ENCODE measurements at regions of chr1 and their contacts with region 1.

Region 1: DNA sequence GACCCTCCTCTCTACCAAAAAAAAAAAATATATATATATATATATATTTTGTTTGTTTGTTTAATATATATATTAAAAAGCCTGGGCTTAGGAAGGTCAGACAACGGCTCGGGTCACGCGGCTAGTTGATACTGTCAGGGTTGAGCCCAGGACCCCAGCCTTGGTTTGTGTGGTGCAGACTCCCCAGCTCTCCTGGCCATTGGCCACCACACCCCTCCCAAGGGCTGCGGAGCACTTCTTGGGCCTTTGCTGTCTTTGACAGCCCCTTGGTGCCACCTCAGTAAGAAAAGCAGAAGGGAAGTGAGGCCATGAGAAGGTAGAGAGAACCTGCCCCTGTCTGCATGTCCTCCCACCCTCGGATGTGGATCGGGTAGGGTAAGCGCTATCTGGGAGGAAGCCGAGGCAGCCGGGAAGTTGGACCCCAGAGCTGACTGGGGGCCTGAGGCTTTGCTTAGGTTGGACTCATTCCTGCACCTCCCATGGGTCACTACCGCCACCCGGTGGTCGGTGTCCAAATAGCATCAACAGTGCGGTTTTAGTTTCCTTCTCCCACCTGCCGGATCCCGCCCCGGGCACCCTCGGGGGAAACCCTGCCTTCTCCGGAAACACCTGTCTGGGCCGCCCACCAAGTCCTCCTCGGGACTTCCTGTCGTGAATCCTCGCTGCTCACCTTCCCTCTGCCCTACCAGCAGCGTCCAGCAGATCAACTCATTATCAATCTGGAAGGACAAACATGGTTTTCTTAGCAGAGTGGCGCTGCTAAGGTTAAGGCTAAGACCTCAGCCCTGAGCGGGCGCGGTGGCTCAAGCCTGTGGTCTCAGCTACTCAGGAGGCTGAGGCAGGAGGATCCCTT is 29.8 kb upstream of the GNPAT start:
- DNase-seq: peak; percentile 94
- H3K4me3 Mint-ChIP-seq: peak overlapping the region; percentile 77
- H3K27ac Mint-ChIP-seq: peak overlapping the region; percentile 70
- H3K4me1 Mint-ChIP-seq: peaks cover 10% of the 10 kb centered on the region
- H3K27me3 Mint-ChIP-seq: no peaks in the 10 kb centered on the region
- CTCF ChIP-seq: peak; percentile 100

Region 2: DNA sequence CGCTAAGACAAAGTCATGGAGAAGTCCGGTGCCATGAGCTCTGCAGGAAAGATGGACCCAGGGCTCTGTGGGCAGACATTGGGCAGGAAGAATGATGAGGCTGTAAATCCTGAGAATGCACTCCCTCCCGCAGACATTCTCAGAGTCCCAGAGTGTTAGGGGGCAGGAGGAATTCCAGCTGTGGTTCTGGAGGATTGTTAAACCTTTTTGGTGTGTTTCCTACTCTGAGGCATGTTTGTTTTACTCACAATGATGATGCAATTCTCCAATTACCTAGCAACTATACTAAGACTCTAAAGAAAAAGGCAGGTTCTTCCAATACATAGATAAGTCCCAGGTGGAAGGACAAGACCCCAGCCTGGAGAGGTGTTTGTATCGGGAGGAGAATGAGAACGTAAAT is 466.8 kb before region 1 on chr1:
- CTCF ChIA-PET with region 1: no interaction called
- POLR2A ChIA-PET with region 1: no interaction called
- intact Hi-C with region 1: loop called (anchors 1 kb)
- DNase-seq: peak; percentile 19
- H3K4me3 Mint-ChIP-seq: no peak overlapping the region
- H3K27ac Mint-ChIP-seq: no peak overlapping the region
- H3K4me1 Mint-ChIP-seq: no peaks in the 10 kb centered on the region
- H3K27me3 Mint-ChIP-seq: no peaks in the 10 kb centered on the region
- CTCF ChIP-seq: no peak

Region 3: GRCh38 chr1:230930986-230931385 is 280.2 kb before region 1 on chr1:
- CTCF ChIA-PET with region 1: interaction called, 18 read pairs
- POLR2A ChIA-PET with region 1: no interaction called
- intact Hi-C with region 1: no loop called
- DNase-seq: peak; percentile 33
- H3K4me3 Mint-ChIP-seq: no peak overlapping the region
- H3K27ac Mint-ChIP-seq: no peak overlapping the region
- H3K4me1 Mint-ChIP-seq: peaks cover 8% of the 10 kb centered on the region
- H3K27me3 Mint-ChIP-seq: no peaks in the 10 kb centered on the region
- CTCF ChIP-seq: no peak

Region 4: GRCh38 chr1:231040019-231040799 is 171.0 kb before region 1 on chr1 and contains the start of gene FAM89A:
- CTCF ChIA-PET with region 1: interaction called, 11 read pairs
- POLR2A ChIA-PET with region 1: interaction called, 7 read pairs
- intact Hi-C with region 1: no loop called
- DNase-seq: peak; percentile 62
- H3K4me3 Mint-ChIP-seq: peak within 1 kb of the TSS; percentile 77
- H3K27ac Mint-ChIP-seq: no peak within 1 kb of the TSS
- H3K4me1 Mint-ChIP-seq: no peaks in the 10 kb centered on the region
- H3K27me3 Mint-ChIP-seq: peaks cover 7% of the 10 kb centered on the region
- CTCF ChIP-seq: no peak
- total RNA-seq, gene FAM89A: 25.2 and 29.2 TPM in 2 replicates

Region 5: GRCh38 chr1:231144416-231145193 is 66.6 kb before region 1 on chr1:
- CTCF ChIA-PET with region 1: no interaction called
- POLR2A ChIA-PET with region 1: no interaction called
- intact Hi-C with region 1: no loop called
- DNase-seq: no peak
- H3K4me3 Mint-ChIP-seq: no peak overlapping the region
- H3K27ac Mint-ChIP-seq: no peak overlapping the region
- H3K4me1 Mint-ChIP-seq: peaks cover 15% of the 10 kb centered on the region
- H3K27me3 Mint-ChIP-seq: peaks cover 33% of the 10 kb centered on the region
- CTCF ChIP-seq: no peak

Region 6: GRCh38 chr1:231200388-231201031 is 10.7 kb before region 1 on chr1:
- CTCF ChIA-PET with region 1: interaction called, 24 read pairs
- POLR2A ChIA-PET with region 1: no interaction called
- intact Hi-C with region 1: no loop called
- DNase-seq: peak; percentile 31
- H3K4me3 Mint-ChIP-seq: no peak overlapping the region
- H3K27ac Mint-ChIP-seq: no peak overlapping the region
- H3K4me1 Mint-ChIP-seq: no peaks in the 10 kb centered on the region
- H3K27me3 Mint-ChIP-seq: peaks cover 53% of the 10 kb centered on the region
- CTCF ChIP-seq: no peak

Region 7: GRCh38 chr1:231590453-231591198 is 379.4 kb after region 1 on chr1:
- CTCF ChIA-PET with region 1: no interaction called
- POLR2A ChIA-PET with region 1: no interaction called
- intact Hi-C with region 1: loop called (anchors 5 kb)
- DNase-seq: peak; percentile 85
- H3K4me3 Mint-ChIP-seq: no peak overlapping the region
- H3K27ac Mint-ChIP-seq: no peak overlapping the region
- H3K4me1 Mint-ChIP-seq: peaks cover 8% of the 10 kb centered on the region
- H3K27me3 Mint-ChIP-seq: no peaks in the 10 kb centered on the region
- CTCF ChIP-seq: peak; percentile 96

Measured in MCF 10A (cell line).